Ascending aorta (tissue), 2 donors: ENCODE measurements at regions of chr1 and their contacts with region 1.

Region 1: GRCh38 chr1:39196244-39197215 is 8.0 kb upstream of the MACF1 start:
- DNase-seq: no peak
- H3K4me3 ChIP-seq: no peak overlapping the region
- H3K27ac ChIP-seq: peak overlapping the region; percentile 90 to 95
- H3K4me1 ChIP-seq: peaks cover 24 to 50% of the 10 kb centered on the region in 2 donors
- H3K27me3 ChIP-seq: no peaks in the 10 kb centered on the region
- CTCF ChIP-seq: no peak

Region 2: DNA sequence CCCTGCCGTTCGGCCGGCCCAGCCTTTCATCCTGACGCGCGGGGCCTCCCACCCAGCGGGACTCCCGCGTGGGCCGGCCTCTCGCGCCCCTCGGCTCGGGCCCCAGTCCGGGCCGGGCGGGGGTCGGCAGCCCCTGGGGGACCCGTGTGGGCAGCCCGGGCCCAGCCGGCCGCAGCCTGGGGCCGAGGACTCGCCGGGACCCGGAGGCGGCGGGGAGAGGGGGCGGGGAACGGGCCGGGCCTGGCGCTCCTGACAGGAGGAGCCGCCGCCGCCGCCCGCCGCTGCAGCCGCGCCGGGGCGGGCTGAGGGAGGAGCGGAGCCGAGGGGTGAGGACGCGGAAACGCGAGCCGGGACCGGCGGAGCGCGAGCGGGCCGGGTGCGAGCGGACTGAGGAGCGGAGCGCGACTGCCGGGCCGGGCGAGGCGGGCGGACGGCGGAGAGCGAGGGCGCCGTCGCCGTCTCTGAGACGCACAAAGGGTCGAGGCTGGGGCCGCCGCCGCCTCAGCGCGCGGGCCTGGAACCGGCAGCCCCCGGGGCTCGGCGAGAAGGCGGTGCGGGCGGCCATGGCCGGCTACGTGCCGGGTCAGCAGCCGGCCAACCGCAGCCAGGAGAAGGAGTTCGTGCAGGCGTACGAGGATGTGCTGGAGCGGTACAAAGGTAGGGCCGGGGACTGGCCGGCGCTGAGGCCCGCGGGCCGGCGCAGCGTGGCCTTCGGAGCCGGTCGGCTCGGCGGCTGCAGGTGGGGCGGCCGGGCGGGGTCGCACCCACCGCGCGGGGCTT is 91.3 kb before region 1 on chr1:
- intact Hi-C with region 1: loop called (anchors 1 kb)
- DNase-seq: peak in 1 of 2 donors; percentile 84
- H3K4me3 ChIP-seq: peak overlapping the region; percentile 70 to 95
- H3K27ac ChIP-seq: peak overlapping the region; percentile 86 to 95
- H3K4me1 ChIP-seq: peaks cover 3 to 37% of the 10 kb centered on the region in 2 donors
- H3K27me3 ChIP-seq: no peaks in the 10 kb centered on the region
- CTCF ChIP-seq: no peak